Activated CD8-positive, alpha-beta memory T cell treated with anti-CD3 and anti-CD28 coated beads, Interleukin-2, amount 10 ng/mL, durations not matched to agents 7 days and 5 days (primary cell): ENCODE measurements at regions of chr16 and their contacts with region 1.

Region 1: GRCh38 chr16:50681021-50681885 is at the start of gene SNX20:
- DNase-seq: peak; percentile 82
- ATAC-seq: peak; percentile 67
- H3K4me3 Mint-ChIP-seq: peak within 1 kb of the TSS; percentile 81
- H3K27ac Mint-ChIP-seq: peak within 1 kb of the TSS; percentile 93
- H3K4me1 Mint-ChIP-seq: peaks cover 84% of the 10 kb centered on the region
- H3K27me3 Mint-ChIP-seq: no peaks in the 10 kb centered on the region
- total RNA-seq, gene SNX20: 60.0 to 72.1 TPM

Region 2: DNA sequence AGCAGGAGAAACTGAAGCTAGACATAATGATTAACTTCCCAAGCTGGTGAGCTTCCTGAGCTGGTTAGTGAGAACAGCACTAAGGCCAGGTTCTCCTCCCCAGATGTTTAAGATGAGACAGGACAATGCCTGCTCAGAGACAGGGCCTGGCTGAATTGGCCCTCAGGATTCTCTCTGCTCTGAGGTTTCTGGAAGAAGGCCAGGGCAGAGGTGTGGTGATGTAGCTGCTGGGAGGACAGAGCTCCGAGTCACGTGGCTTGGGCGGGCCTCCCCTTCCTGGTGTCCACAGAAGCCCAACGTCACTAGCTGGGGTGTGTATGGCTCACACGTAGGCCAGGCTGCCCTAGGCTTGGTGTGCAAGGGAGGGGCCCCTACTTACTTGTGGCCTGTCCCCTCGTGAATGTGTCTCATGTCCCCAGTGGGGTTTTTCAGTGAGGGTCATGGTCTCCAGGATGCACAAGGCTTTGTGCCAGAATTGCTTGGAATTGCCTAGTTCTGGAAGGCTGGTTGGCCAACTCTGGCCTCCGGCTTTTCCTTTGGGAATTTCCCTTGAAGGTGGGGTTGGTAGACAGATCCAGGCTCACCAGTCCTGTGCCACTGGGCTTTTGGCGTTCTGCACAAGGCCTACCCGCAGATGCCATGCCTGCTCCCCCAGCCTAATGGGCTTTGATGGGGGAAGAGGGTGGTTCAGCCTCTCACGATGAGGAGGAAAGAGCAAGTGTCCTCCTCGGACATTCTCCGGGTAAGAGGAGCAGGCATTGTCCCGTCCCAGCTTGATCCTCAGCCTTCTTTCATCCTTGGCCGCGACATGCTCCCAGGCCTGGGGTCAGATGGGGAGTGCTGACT is 15.5 kb after region 1 on chr16:
- CTCF ChIA-PET with region 1: interaction called, 10 read pairs
- DNase-seq: peak; percentile 86
- ATAC-seq: peak; percentile 75
- H3K4me3 Mint-ChIP-seq: peak overlapping the region; percentile 82
- H3K27ac Mint-ChIP-seq: peak overlapping the region; percentile 93
- H3K4me1 Mint-ChIP-seq: peaks cover 72% of the 10 kb centered on the region
- H3K27me3 Mint-ChIP-seq: no peaks in the 10 kb centered on the region

Region 3: GRCh38 chr16:50747207-50747956 is 66.1 kb after region 1 on chr16:
- CTCF ChIA-PET with region 1: interaction called, 24 read pairs
- DNase-seq: peak; percentile 60
- ATAC-seq: peak; percentile 70
- H3K4me3 Mint-ChIP-seq: peak overlapping the region; percentile 72
- H3K27ac Mint-ChIP-seq: peak overlapping the region; percentile 92
- H3K4me1 Mint-ChIP-seq: peaks cover 62% of the 10 kb centered on the region
- H3K27me3 Mint-ChIP-seq: no peaks in the 10 kb centered on the region